ENCODE measurements at regions of chr5 and their contacts with region 1.

Region 1: DNA sequence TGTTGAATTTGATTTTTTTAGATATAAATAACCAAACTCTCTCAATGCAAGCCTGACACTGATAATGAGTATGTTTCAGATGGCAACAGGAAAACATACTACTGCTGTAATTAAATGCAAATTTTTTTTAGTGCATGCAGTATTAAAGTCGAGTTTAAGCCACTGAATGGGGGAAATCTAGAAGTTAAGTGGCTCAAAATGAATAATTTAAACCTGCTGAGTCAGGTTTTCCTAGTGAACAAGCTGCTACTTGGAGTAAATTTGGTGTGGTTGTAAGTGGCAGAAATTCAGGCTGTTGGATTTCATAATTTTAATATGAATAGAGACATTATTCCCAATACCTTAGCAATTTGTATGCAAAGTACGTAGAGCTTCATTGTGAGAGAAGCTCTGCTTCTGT is 121.8 kb downstream of the SLF1 start:
- DNase-seq: no peak
- ATAC-seq: no peak
- H3K4me3 ChIP-seq: no peak overlapping the region
- H3K27ac ChIP-seq: no peak overlapping the region
- H3K4me1 ChIP-seq: peaks cover 9% of the 10 kb centered on the region
- H3K27me3 ChIP-seq: no peaks in the 10 kb centered on the region
- CTCF ChIP-seq: no peak
- EP300 ChIP-seq: no peak
- POLR2A ChIP-seq: no peak
- RAD21 ChIP-seq: no peak

Region 2: GRCh38 chr5:94613583-94613982 is 126.7 kb before region 1 on chr5:
- CTCF ChIA-PET with region 1: interaction called, 29 read pairs
- POLR2A ChIA-PET with region 1: no interaction called
- RAD21 ChIA-PET with region 1: interaction called, 9 read pairs
- SMC1A ChIA-PET with region 1: interaction called, 10 read pairs
- in situ Hi-C with region 1: no loop called
- intact Hi-C with region 1: loop called (anchors 2 kb)
- DNase-seq: no peak
- ATAC-seq: peak; percentile 32
- H3K4me3 ChIP-seq: no peak overlapping the region
- H3K27ac ChIP-seq: no peak overlapping the region
- H3K4me1 ChIP-seq: peaks cover 3% of the 10 kb centered on the region
- H3K27me3 ChIP-seq: no peaks in the 10 kb centered on the region
- CTCF ChIP-seq: peak; percentile 27 to 32 (median 31); a peak in 4 of 6 replicates
- EP300 ChIP-seq: no peak
- POLR2A ChIP-seq: no peak
- RAD21 ChIP-seq: peak; percentile 44

Region 3: GRCh38 chr5:94700592-94700991 is 39.7 kb before region 1 on chr5:
- CTCF ChIA-PET with region 1: interaction called, 26 read pairs
- POLR2A ChIA-PET with region 1: interaction called, 6 read pairs
- RAD21 ChIA-PET with region 1: interaction called, 9 read pairs
- SMC1A ChIA-PET with region 1: interaction called, 12 read pairs
- in situ Hi-C with region 1: no loop called
- intact Hi-C with region 1: loop called (anchors 2 kb)
- DNase-seq: peak; percentile 33
- ATAC-seq: peak; percentile 82
- H3K4me3 ChIP-seq: no peak overlapping the region
- H3K27ac ChIP-seq: peak overlapping the region; percentile 18; the same call in 1 of the 2 replicates
- H3K4me1 ChIP-seq: peaks cover 19% of the 10 kb centered on the region; the same call in 1 of the 2 replicates
- H3K27me3 ChIP-seq: no peaks in the 10 kb centered on the region
- CTCF ChIP-seq: no peak
- EP300 ChIP-seq: peak in 1 of 2 experiments; percentile 48; a peak in 2 of 4 replicates
- POLR2A ChIP-seq: no peak
- RAD21 ChIP-seq: no peak

Region 4: GRCh38 chr5:94715671-94716211 is 24.5 kb before region 1 on chr5:
- CTCF ChIA-PET with region 1: interaction called, 13 read pairs
- POLR2A ChIA-PET with region 1: interaction called, 3 read pairs
- RAD21 ChIA-PET with region 1: interaction called, 6 read pairs
- SMC1A ChIA-PET with region 1: interaction called, 11 read pairs
- in situ Hi-C with region 1: no loop called
- intact Hi-C with region 1: no loop called
- DNase-seq: no peak
- ATAC-seq: no peak; the same call in 2 of the 3 replicates
- H3K4me3 ChIP-seq: no peak overlapping the region
- H3K27ac ChIP-seq: no peak overlapping the region
- H3K4me1 ChIP-seq: no peaks in the 10 kb centered on the region
- H3K27me3 ChIP-seq: no peaks in the 10 kb centered on the region
- CTCF ChIP-seq: no peak
- EP300 ChIP-seq: no peak
- POLR2A ChIP-seq: no peak
- RAD21 ChIP-seq: no peak

Region 5: GRCh38 chr5:94849821-94850736 is 109.8 kb after region 1 on chr5:
- CTCF ChIA-PET with region 1: interaction called, 25 read pairs
- POLR2A ChIA-PET with region 1: no interaction called
- RAD21 ChIA-PET with region 1: interaction called, 7 read pairs
- SMC1A ChIA-PET with region 1: interaction called, 11 read pairs
- in situ Hi-C with region 1: no loop called
- intact Hi-C with region 1: loop called (anchors 2 kb)
- DNase-seq: peak; percentile 16
- ATAC-seq: peak; percentile 92
- H3K4me3 ChIP-seq: no peak overlapping the region
- H3K27ac ChIP-seq: no peak overlapping the region
- H3K4me1 ChIP-seq: no peaks in the 10 kb centered on the region
- H3K27me3 ChIP-seq: no peaks in the 10 kb centered on the region
- CTCF ChIP-seq: peak; percentile 68 to 79 (median 74)
- EP300 ChIP-seq: no peak
- POLR2A ChIP-seq: no peak
- RAD21 ChIP-seq: peak; percentile 99

Region 6: DNA sequence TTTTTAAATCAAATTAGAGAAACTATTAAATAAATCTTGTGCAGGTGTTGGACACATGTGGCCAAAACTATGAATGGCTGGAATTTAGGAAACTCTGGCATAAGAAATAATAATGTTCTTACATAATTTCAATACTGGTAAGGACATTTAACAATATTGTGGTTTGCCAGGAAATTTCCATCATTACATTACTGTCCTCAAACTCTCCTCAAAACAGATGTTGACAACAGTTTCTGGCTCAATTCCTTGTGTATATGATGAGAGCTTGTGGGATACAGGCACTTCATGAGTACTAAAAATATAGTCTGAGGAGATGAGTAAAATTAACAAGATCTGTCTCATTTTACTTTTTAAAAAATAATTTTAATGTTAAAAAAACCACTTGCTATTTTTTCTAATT is 516.7 kb after region 1 on chr5:
- CTCF ChIA-PET with region 1: no interaction called
- POLR2A ChIA-PET with region 1: no interaction called
- RAD21 ChIA-PET with region 1: no interaction called
- SMC1A ChIA-PET with region 1: no interaction called
- in situ Hi-C with region 1: no loop called
- intact Hi-C with region 1: no loop called
- DNase-seq: no peak
- ATAC-seq: no peak
- H3K4me3 ChIP-seq: no peak overlapping the region
- H3K27ac ChIP-seq: no peak overlapping the region
- H3K4me1 ChIP-seq: no peaks in the 10 kb centered on the region; the same call in 1 of the 2 replicates
- H3K27me3 ChIP-seq: peaks cover 0 to 3% of the 10 kb centered on the region in 2 experiments; a peak in 1 of 4 replicates
- CTCF ChIP-seq: no peak
- EP300 ChIP-seq: no peak
- POLR2A ChIP-seq: no peak
- RAD21 ChIP-seq: no peak

Measured in GM12878 (cell line).